ENCODE measurements at regions of chr7 and their contacts with region 1.

Region 1: GRCh38 chr7:150368096-150368883 is at the start of gene REPIN1:
- DNase-seq: peak in 1 of 2 experiments; percentile 92
- H3K4me3 ChIP-seq: peak within 1 kb of the TSS; percentile 63 to 78 (median 69)
- H3K27ac ChIP-seq: peak within 1 kb of the TSS; percentile 95
- H3K4me1 ChIP-seq: peaks cover 2 to 26% (median 12%) of the 10 kb centered on the region in 4 experiments
- H3K27me3 ChIP-seq: no peaks in the 10 kb centered on the region
- CTCF ChIP-seq: no peak
- EP300 ChIP-seq: peak in 1 of 2 experiments; percentile 17; a peak in 1 of 3 replicates
- POLR2A ChIP-seq: peak in 1 of 2 experiments; percentile 41; a peak in 2 of 3 replicates
- RAD21 ChIP-seq: no peak; a peak in 1 of 4 replicates
- total RNA-seq, gene REPIN1: 125 and 130 TPM in 2 replicates

Region 2: DNA sequence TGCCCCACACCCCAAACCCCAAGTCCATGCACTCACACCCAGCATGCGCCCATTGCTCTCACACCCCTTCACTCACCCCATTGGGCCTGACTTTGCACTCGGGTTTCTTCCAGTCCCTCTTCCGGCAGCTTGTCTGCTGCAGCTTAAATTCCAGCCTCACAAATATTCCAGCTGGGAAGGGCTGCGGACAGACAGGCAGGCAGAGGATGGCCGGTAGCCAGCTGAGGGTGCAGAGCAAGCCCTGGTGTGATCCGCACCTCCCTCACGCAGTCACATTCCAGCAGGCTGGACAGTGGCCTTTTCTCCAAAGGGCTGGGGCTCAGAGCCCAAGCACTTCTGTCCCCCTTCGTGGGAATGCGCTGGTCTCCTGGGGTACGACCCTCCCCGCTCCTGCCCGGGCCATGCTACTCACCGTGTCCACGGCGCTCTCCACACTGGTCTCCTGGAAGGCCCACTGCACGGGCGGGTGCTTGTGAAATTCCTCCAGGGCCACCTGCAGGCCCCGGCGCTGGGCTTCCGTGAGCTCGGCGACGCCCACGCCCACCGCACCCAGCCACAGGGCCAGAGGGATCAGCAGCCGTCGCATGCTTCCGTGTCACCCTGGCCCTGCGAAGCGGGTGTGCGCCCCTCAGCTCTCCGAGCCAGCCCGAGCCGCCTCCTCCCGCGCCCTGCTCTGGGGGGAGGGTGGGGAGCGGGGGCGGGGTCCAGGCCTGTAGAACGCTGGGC is 28.1 kb before region 1 on chr7:
- CTCF ChIA-PET with region 1: interaction called, 4 read pairs
- POLR2A ChIA-PET with region 1: interaction called, 76 read pairs
- DNase-seq: no peak
- H3K4me3 ChIP-seq: peak overlapping the region; percentile 84 to 94 (median 85)
- H3K27ac ChIP-seq: no peak overlapping the region
- H3K4me1 ChIP-seq: peaks cover 15 to 65% (median 38%) of the 10 kb centered on the region in 4 experiments
- H3K27me3 ChIP-seq: peaks cover 0 to 26% (median 20%) of the 10 kb centered on the region in 4 experiments; a peak in 6 of 7 replicates
- CTCF ChIP-seq: no peak
- EP300 ChIP-seq: no peak
- POLR2A ChIP-seq: no peak
- RAD21 ChIP-seq: no peak

Region 3: GRCh38 chr7:150378853-150379440 is 10.7 kb after region 1 on chr7 and contains the start of gene ZNF775:
- CTCF ChIA-PET with region 1: interaction called, 18 read pairs
- POLR2A ChIA-PET with region 1: interaction called, 116 read pairs
- DNase-seq: peak; percentile 89 to 93
- H3K4me3 ChIP-seq: peak within 1 kb of the TSS; percentile 88 to 96 (median 90)
- H3K27ac ChIP-seq: peak within 1 kb of the TSS; percentile 70
- H3K4me1 ChIP-seq: peaks cover 15 to 44% (median 27%) of the 10 kb centered on the region in 4 experiments
- H3K27me3 ChIP-seq: no peaks in the 10 kb centered on the region
- CTCF ChIP-seq: no peak
- EP300 ChIP-seq: no peak
- POLR2A ChIP-seq: peak in 1 of 2 experiments; percentile 79; a peak in 2 of 3 replicates
- RAD21 ChIP-seq: no peak; a peak in 1 of 4 replicates
- total RNA-seq, gene ZNF775: 21.5 and 24.9 TPM in 2 replicates

Region 4: DNA sequence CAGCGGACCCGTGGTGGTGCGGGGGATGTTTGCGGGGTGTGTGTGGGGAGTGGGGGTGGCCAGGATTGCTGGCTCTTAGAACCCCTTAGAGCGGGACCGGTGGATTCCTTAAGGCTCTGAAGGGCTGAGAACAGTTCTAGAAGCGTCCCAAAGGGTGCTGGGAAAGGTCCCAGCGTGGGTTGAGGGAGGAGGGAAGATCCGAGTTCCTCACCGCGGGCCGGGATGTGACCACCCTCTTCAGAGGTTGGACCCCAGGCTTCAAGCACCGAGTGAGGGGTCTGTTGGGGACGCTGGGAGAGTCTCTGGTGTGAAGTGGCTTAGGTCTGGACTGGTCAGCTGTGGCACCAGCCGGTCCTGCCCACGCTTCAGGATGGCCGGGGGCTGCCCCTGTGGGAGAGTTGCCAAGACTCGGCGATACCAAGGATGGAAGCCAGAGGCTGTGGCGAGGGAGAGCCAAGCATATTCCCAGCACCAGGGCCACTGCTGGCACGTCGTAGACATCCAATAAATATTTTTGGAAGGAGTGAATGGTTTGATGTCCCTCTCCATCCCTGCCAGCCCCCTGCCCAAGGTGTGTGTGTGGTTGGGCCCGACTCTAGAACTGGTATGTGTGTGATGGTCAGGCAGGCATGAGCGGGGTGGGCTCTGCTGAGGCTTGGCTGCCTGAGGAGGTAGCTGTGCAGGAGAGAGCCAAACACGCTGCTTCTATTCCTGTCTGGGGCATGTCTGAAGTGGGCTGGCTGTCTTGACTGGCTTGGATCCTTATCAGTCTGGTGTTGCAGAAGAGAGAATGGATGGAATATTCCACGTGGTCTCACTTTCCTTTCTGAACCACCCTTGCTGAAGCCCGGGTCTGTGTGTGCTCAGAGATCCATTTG is 30.1 kb after region 1 on chr7:
- CTCF ChIA-PET with region 1: interaction called, 4 read pairs
- POLR2A ChIA-PET with region 1: interaction called, 230 read pairs
- DNase-seq: no peak
- H3K4me3 ChIP-seq: no peak overlapping the region
- H3K27ac ChIP-seq: peak overlapping the region; percentile 90; the same call in 1 of the 2 replicates
- H3K4me1 ChIP-seq: peaks cover 20 to 47% (median 37%) of the 10 kb centered on the region in 4 experiments
- H3K27me3 ChIP-seq: no peaks in the 10 kb centered on the region
- CTCF ChIP-seq: no peak
- EP300 ChIP-seq: no peak
- POLR2A ChIP-seq: no peak
- RAD21 ChIP-seq: no peak

Region 5: GRCh38 chr7:150410680-150411346 is 42.5 kb after region 1 on chr7:
- CTCF ChIA-PET with region 1: interaction called, 3 read pairs
- POLR2A ChIA-PET with region 1: interaction called, 230 read pairs
- DNase-seq: no peak
- H3K4me3 ChIP-seq: no peak overlapping the region
- H3K27ac ChIP-seq: no peak overlapping the region
- H3K4me1 ChIP-seq: peaks cover 9 to 15% (median 12%) of the 10 kb centered on the region in 4 experiments
- H3K27me3 ChIP-seq: no peaks in the 10 kb centered on the region
- CTCF ChIP-seq: no peak
- EP300 ChIP-seq: no peak
- POLR2A ChIP-seq: no peak
- RAD21 ChIP-seq: no peak

Region 6: GRCh38 chr7:150481186-150481920 is 113.1 kb after region 1 on chr7:
- CTCF ChIA-PET with region 1: no interaction called
- POLR2A ChIA-PET with region 1: no interaction called
- DNase-seq: no peak
- H3K4me3 ChIP-seq: no peak overlapping the region
- H3K27ac ChIP-seq: no peak overlapping the region
- H3K4me1 ChIP-seq: peaks cover 0 to 3% (median 0%) of the 10 kb centered on the region in 4 experiments; a peak in 1 of 7 replicates
- H3K27me3 ChIP-seq: no peaks in the 10 kb centered on the region
- CTCF ChIP-seq: no peak
- EP300 ChIP-seq: no peak
- POLR2A ChIP-seq: no peak
- RAD21 ChIP-seq: no peak

Region 7: DNA sequence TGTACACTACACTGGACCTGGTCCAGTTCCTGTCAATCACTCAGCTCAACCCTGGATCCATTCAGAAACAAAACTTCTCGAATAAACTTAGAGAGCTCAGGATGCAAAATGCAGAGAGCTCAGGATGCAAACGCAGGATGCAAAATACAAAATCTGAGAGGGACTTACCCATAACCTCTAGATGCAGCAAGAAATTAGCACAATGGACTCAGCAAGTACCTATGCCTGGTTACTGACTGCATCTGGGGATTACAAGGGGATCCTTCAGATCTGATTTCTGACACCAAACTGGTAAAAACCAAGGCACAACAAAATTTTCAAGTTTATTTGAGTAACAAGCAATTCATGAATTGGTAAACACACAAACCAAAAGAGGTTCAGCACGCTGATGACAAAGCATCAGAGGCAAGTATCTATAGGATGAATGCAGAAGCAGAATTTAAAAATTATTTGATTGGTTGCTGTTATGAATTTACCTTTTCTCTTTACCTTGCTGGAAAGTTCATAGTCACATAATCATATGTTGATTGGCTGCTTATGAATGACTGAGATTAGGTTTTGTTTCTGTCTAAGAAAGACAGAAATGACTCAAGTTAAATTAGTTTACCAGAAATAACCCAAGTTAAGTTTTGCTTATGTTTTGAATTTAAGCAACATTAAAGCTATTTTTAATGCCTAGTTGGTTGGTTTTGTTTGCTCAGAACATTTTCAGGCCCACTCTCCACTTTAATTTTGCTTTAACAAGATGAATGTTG is 252.5 kb after region 1 on chr7:
- CTCF ChIA-PET with region 1: no interaction called
- POLR2A ChIA-PET with region 1: no interaction called
- DNase-seq: no peak
- H3K4me3 ChIP-seq: no peak overlapping the region
- H3K27ac ChIP-seq: no peak overlapping the region
- H3K4me1 ChIP-seq: no peaks in the 10 kb centered on the region
- H3K27me3 ChIP-seq: peaks cover 0 to 2% (median 0%) of the 10 kb centered on the region in 4 experiments; a peak in 1 of 7 replicates
- CTCF ChIP-seq: no peak
- EP300 ChIP-seq: no peak
- POLR2A ChIP-seq: no peak
- RAD21 ChIP-seq: no peak

Measured in H1 (cell line).